Right ventricle myocardium inferior (tissue), 1 donor: ENCODE measurements at regions of chr12 and their contacts with region 1.

Region 1: DNA sequence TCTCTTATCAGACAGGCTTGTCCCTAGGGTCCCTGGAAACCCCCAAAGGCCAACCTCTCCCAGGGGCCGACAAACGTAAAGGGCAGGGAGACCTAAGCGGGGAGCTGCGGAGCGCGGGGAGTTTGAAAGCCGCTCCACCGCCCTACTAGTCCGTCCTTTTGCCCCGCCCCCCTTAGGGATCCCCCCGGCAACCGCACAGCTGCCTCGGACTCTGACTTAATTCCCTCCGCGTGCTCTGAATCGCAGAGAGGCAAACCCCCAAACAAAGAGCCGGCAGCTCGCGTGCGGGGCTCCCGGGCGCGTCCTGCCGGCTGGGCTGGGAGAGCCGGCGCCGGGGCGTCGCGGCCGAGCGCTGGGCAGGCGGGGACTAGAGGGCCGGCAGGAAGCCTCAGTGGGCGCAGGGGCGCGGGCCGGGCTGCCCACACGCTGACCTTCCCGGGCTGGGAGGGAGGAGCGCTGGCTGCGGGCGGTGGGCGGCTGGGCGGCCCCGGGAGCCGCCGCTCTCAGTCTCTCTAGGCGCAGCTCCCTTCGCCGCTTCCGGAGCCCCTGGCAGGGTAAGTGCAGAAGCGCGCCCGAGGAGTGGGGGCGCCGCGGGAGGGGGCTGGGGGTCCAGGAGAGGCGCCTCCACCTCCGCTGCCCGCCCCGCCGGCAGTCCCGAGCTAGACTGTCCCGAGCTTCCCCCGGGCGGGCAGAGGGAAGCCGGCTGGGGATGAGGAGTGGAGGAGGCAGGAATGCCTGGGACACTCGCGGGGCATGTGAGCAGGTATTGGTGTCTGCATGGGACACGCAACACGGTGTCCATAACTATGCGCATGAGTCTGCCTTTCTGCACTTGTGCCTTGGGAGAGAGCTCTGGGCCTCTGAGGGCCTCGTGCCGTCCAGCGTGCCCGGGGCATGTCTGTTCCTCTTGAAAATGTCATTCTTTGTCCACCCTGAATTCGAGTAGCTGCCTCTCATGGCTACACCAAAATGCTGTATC is at the start of gene TSPAN11:
- DNase-seq: no peak
- ATAC-seq: peak; percentile 33
- total RNA-seq, gene TSPAN11: 1.5 TPM

Region 2: DNA sequence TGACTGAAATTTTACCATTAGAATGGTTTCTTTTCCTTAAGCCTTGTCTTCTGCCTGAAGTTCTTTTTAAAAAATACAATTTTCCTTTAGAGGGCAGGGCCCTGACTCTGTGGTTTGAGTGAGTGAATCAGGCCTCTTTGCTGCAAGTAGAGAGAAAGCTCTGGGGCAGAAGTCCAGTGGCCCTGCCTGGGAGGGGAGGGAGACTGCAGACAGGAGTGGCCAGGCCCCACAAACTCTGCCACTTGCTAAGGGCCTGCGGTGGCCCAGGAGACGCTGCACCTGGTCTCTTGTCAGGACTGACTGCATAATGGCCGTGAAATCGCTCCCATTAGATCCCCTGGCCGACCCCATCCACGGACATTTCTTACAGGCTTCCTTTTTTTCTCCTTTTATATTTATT is 25.5 kb after region 1 on chr12:
- intact Hi-C with region 1: no loop called
- DNase-seq: no peak
- ATAC-seq: no peak

Region 3: GRCh38 chr12:30978639-30979038 is 52.1 kb after region 1 on chr12:
- intact Hi-C with region 1: loop called (anchors 5 kb)
- DNase-seq: no peak
- ATAC-seq: peak; percentile 53

Region 4: GRCh38 chr12:30989754-30990153 is 63.2 kb after region 1 on chr12:
- intact Hi-C with region 1: no loop called
- DNase-seq: no peak
- ATAC-seq: peak; percentile 74